Activated CD4-positive, alpha-beta T cell treated with anti-CD3 and anti-CD28 coated beads, Interleukin-2, amount 10 ng/mL, durations not matched to agents 24 days and 14 days (primary cell): ENCODE measurements at regions of chr15 and their contacts with region 1.

Region 1: DNA sequence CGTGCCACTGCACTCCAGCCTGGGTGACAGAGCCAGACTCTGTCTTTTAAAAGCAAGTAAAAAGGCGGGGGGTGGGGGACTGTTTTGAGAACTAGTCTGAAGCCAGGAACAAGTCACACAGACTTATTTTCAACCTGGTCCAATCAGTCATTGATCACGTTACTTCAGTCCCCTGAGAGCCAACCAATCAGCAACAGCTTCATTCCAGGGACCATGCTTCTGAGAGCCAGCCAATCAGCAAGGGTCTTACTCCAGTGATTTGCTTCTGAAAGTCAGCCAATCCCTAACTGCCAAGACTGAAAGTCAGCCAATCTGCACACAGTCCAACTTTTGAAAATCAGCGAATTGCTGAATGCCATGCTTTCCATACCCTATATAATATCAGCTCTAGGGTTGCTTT is 48.6 kb upstream of the C15orf39 start:
- DNase-seq: peak; percentile 75
- H3K4me3 Mint-ChIP-seq: no peak overlapping the region
- H3K27ac Mint-ChIP-seq: no peak overlapping the region
- H3K4me1 Mint-ChIP-seq: peaks cover 23% of the 10 kb centered on the region
- H3K27me3 Mint-ChIP-seq: no peaks in the 10 kb centered on the region

Region 2: DNA sequence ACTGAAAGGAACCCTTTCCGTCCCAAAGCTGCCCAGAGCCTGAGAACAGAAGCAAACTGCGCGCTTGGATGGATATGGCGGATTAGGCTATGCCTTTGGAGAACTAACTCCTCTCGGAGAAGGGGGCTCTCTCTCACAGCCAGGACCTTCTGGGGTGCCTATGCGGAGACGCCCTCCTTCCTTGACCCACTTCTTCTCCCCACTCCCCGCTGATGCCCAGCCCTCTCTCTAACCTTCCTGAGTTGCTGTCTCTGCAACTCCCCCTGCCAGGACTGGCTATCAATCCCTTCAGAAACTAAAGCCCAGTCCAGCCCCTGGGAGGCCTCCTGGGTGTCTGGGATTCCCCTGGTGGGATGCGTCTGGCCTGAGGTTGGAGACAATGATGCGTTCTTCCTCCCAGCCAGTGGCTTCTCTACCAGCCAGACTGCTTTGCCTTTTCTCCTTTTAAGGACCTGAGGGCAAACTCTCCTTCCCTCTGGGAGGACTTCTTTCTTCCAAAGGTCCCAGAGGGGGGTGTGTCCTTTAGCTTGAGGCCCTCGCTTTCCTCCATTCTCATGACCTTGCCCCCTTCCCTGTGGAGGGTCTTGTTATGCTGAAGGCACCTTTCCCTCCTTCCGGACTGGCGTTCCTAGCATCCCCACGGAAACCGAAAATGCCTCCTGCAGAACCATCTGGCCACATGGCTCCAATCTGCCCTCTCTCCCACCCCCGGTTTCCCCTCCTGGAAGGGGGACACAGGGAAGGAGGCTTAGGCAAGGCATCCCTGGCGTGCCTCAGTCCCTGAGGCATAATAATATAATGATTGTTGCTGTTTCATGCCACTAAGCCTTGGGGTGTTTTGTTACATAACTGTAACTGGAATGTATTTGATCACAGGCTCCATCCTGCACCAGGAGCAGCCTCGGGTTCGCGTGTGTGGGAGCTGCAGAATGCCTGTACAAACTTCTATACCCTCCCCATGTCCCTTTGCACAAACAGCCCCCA is 14.8 kb before region 1 on chr15:
- intact Hi-C with region 1: no loop called
- DNase-seq: no peak
- H3K4me3 Mint-ChIP-seq: no peak overlapping the region
- H3K27ac Mint-ChIP-seq: no peak overlapping the region
- H3K4me1 Mint-ChIP-seq: peaks cover 3% of the 10 kb centered on the region
- H3K27me3 Mint-ChIP-seq: peaks cover 8% of the 10 kb centered on the region

Region 3: GRCh38 chr15:75174101-75174500 is 21.0 kb after region 1 on chr15:
- intact Hi-C with region 1: no loop called
- DNase-seq: no peak
- H3K4me3 Mint-ChIP-seq: no peak overlapping the region
- H3K27ac Mint-ChIP-seq: no peak overlapping the region
- H3K4me1 Mint-ChIP-seq: peaks cover 40% of the 10 kb centered on the region
- H3K27me3 Mint-ChIP-seq: peaks cover 18% of the 10 kb centered on the region

Region 4: GRCh38 chr15:75185271-75186029 is 32.4 kb after region 1 on chr15:
- intact Hi-C with region 1: loop called (anchors 5 kb)
- DNase-seq: no peak
- H3K4me3 Mint-ChIP-seq: no peak overlapping the region
- H3K27ac Mint-ChIP-seq: no peak overlapping the region
- H3K4me1 Mint-ChIP-seq: peaks cover 11% of the 10 kb centered on the region
- H3K27me3 Mint-ChIP-seq: peaks cover 20% of the 10 kb centered on the region